H1 (cell line): ENCODE measurements at regions of chr18 and their contacts with region 1.

Region 1: GRCh38 chr18:48002933-48003365 is 72.5 kb upstream of the SMAD2 start:
- DNase-seq: no peak
- H3K4me3 ChIP-seq: no peak overlapping the region
- H3K27ac ChIP-seq: no peak overlapping the region
- H3K4me1 ChIP-seq: peaks cover 0 to 11% (median 5%) of the 10 kb centered on the region in 4 experiments; a peak in 5 of 7 replicates
- H3K27me3 ChIP-seq: peaks cover 0 to 13% (median 9%) of the 10 kb centered on the region in 4 experiments; a peak in 5 of 7 replicates
- CTCF ChIP-seq: no peak
- EP300 ChIP-seq: no peak
- POLR2A ChIP-seq: no peak
- RAD21 ChIP-seq: no peak

Region 2: GRCh38 chr18:47986620-47987387 is 16.1 kb before region 1 on chr18:
- CTCF ChIA-PET with region 1: interaction called, 59 read pairs
- POLR2A ChIA-PET with region 1: interaction called, 3 read pairs
- DNase-seq: no peak
- H3K4me3 ChIP-seq: no peak overlapping the region
- H3K27ac ChIP-seq: no peak overlapping the region
- H3K4me1 ChIP-seq: peaks cover 0 to 5% (median under 1%) of the 10 kb centered on the region in 4 experiments; a peak in 4 of 7 replicates
- H3K27me3 ChIP-seq: no peaks in the 10 kb centered on the region
- CTCF ChIP-seq: no peak
- EP300 ChIP-seq: no peak
- POLR2A ChIP-seq: no peak
- RAD21 ChIP-seq: no peak

Region 3: GRCh38 chr18:48119204-48119603 is 116.3 kb after region 1 on chr18:
- CTCF ChIA-PET with region 1: no interaction called
- POLR2A ChIA-PET with region 1: no interaction called
- DNase-seq: no peak
- H3K4me3 ChIP-seq: no peak overlapping the region
- H3K27ac ChIP-seq: no peak overlapping the region
- H3K4me1 ChIP-seq: peaks cover 0 to 4% (median 2%) of the 10 kb centered on the region in 4 experiments; a peak in 1 of 7 replicates
- H3K27me3 ChIP-seq: no peaks in the 10 kb centered on the region
- CTCF ChIP-seq: no peak
- EP300 ChIP-seq: no peak
- POLR2A ChIP-seq: no peak
- RAD21 ChIP-seq: no peak